ENCODE measurements at regions of chr11 and their contacts with region 1.

Region 1: GRCh38 chr11:94519478-94520084 is 7.3 kb downstream of the C11orf97 start:
- DNase-seq: no peak
- H3K4me3 ChIP-seq: no peak overlapping the region
- H3K27ac ChIP-seq: no peak overlapping the region
- H3K4me1 ChIP-seq: peaks cover 0 to 4% (median 4%) of the 10 kb centered on the region in 4 donors
- H3K27me3 ChIP-seq: no peaks in the 10 kb centered on the region
- CTCF ChIP-seq: peak; percentile 60 to 74 (median 63)
- EP300 ChIP-seq: no peak
- POLR2A ChIP-seq: no peak

Region 2: DNA sequence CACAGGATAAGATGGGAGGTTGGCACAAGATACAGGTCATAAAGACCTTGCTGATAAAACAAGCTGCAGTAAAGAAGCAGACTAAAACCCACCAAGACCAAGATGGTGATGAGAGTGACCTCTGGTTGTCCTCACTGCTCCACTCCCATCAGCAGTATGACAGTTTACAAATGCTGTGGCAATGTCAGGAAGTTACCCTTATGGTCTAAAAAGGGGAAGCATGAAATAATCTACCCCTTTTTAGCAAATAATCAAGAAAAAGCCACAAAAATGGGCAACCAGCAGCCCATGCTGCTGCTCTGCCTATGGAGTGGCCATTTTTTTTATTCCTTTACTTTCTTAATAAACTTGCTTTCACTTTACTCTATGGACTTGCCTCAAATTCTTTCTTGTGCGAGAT is 38.9 kb after region 1 on chr11:
- intact Hi-C with region 1: loop called (anchors 5 kb)
- DNase-seq: no peak
- H3K4me3 ChIP-seq: no peak overlapping the region
- H3K27ac ChIP-seq: no peak overlapping the region
- H3K4me1 ChIP-seq: peaks cover 0 to 16% (median 10%) of the 10 kb centered on the region in 4 donors
- H3K27me3 ChIP-seq: no peaks in the 10 kb centered on the region
- CTCF ChIP-seq: no peak
- EP300 ChIP-seq: no peak
- POLR2A ChIP-seq: no peak

Region 3: DNA sequence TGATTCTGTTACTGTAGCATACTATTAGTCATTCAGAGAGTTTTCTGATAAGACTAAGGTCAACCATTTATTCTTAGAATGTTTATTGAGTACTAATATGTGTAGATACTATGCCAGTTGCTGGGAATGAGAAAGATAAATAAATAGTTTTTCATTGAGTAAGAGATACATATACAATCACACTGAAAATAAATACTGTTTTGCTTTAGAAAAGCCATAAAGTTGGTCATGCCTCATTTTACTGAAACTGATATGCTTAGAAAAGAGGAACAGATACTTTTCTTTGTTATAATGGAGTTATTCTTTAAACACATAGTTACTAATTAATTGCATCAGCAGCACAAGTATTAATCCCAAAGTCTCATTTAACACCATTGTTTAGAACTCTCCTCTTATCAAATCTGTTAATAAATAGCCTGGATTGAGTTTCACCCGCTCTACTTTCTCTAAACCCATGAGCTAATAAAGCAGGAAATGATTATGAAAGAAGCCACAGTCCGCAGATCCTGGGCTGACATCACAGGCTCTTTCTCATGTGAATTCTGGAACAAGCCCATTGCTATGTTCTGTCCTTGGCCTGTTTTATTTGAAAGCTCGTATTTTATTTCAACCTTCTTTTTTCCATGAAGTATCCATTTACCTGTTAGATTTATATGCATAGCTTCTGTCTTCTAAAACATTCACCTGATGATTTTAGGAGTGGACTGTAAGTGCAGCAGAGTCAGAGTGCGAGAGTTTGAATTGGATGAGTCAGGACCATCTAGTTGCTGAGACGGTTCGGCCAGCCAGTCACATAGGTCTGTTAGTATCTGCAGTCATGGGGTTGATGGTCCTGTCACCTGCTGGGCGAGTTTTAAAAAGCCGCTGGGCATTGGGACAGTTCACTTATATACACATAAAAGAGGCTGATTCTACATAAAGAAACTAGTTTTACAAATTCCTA is 83.1 kb after region 1 on chr11:
- intact Hi-C with region 1: loop called (anchors 2 kb)
- DNase-seq: no peak
- H3K4me3 ChIP-seq: no peak overlapping the region
- H3K27ac ChIP-seq: no peak overlapping the region
- H3K4me1 ChIP-seq: no peaks in the 10 kb centered on the region
- H3K27me3 ChIP-seq: no peaks in the 10 kb centered on the region
- CTCF ChIP-seq: no peak
- EP300 ChIP-seq: no peak
- POLR2A ChIP-seq: no peak

Region 4: GRCh38 chr11:94897330-94897768 is 377.8 kb after region 1 on chr11:
- intact Hi-C with region 1: loop called (anchors 10 kb)
- DNase-seq: peak; percentile 93
- H3K4me3 ChIP-seq: no peak overlapping the region
- H3K27ac ChIP-seq: peak overlapping the region in 1 of 4 donors; percentile 34
- H3K4me1 ChIP-seq: peaks cover 0 to 7% (median 2%) of the 10 kb centered on the region in 4 donors
- H3K27me3 ChIP-seq: no peaks in the 10 kb centered on the region
- CTCF ChIP-seq: peak; percentile 82 to 93 (median 83)
- EP300 ChIP-seq: no peak
- POLR2A ChIP-seq: no peak

Measured in esophagus muscularis mucosa (tissue), 4 donors.